ENCODE measurements at regions of chr14 and their contacts with region 1.

Region 1: DNA sequence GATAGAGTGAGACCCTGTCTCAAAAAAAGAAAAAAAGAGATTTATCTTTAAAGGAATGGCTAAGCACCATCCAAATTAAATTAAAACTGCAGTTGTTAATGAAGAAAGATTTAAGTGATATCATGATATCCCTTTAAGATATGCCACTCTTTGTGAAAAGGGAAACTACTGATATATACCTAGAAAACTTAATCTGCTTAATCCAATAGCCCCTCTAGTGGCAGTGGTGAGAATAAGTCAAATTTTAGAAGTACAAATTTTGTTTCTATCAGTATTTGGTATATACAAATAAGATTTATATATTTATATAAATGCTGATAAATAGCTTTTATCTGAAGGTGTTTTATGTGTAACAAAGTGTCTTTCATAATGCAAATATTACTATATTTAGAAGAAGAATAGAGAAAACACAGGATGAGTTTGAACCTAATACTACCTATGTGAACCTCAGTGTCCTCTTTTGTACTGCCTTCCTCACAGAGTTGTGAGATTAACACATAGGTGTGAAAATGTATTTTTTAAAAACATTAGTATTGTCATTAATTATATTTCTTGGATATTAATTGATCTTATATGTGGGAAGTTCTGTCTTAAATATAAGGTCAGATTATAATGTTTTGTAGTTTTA is 51.4 kb upstream of the GARIN2 start:
- DNase-seq: no peak
- H3K4me3 Mint-ChIP-seq: no peak overlapping the region
- H3K27ac Mint-ChIP-seq: no peak overlapping the region
- H3K4me1 Mint-ChIP-seq: peaks cover 15% of the 10 kb centered on the region
- H3K27me3 Mint-ChIP-seq: no peaks in the 10 kb centered on the region

Region 2: GRCh38 chr14:66495218-66496098 is 642.4 kb before region 1 on chr14:
- intact Hi-C with region 1: loop called (anchors 5 kb)
- DNase-seq: no peak
- H3K4me3 Mint-ChIP-seq: no peak overlapping the region
- H3K27ac Mint-ChIP-seq: no peak overlapping the region
- H3K4me1 Mint-ChIP-seq: peaks cover 20% of the 10 kb centered on the region
- H3K27me3 Mint-ChIP-seq: peaks cover 13% of the 10 kb centered on the region

Region 3: DNA sequence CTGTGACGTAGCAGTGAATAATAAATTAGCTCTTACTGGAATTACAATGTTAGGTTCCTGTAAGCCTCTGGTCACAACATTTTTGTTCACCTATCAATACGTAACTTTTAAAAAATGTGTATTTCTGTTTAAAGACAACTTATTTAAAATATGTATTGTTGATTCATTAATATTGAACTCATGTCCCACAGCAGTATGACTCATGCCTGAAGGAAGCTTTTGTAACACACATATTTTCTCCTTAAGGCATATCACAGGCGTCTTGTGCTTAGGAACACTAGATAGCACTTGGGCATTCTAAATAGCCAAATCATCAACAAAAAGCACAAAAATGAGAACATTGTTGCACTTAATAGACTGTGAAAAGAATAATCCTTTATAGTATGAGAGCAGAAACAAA is 537.4 kb before region 1 on chr14:
- intact Hi-C with region 1: no loop called
- DNase-seq: no peak
- H3K4me3 Mint-ChIP-seq: no peak overlapping the region
- H3K27ac Mint-ChIP-seq: no peak overlapping the region
- H3K4me1 Mint-ChIP-seq: peaks cover 6% of the 10 kb centered on the region
- H3K27me3 Mint-ChIP-seq: no peaks in the 10 kb centered on the region

Region 4: GRCh38 chr14:66752109-66752508 is 385.7 kb before region 1 on chr14:
- intact Hi-C with region 1: loop called (anchors 10 kb)
- DNase-seq: no peak
- H3K4me3 Mint-ChIP-seq: no peak overlapping the region
- H3K27ac Mint-ChIP-seq: no peak overlapping the region
- H3K4me1 Mint-ChIP-seq: peaks cover 9% of the 10 kb centered on the region
- H3K27me3 Mint-ChIP-seq: peaks cover 6% of the 10 kb centered on the region

Region 5: DNA sequence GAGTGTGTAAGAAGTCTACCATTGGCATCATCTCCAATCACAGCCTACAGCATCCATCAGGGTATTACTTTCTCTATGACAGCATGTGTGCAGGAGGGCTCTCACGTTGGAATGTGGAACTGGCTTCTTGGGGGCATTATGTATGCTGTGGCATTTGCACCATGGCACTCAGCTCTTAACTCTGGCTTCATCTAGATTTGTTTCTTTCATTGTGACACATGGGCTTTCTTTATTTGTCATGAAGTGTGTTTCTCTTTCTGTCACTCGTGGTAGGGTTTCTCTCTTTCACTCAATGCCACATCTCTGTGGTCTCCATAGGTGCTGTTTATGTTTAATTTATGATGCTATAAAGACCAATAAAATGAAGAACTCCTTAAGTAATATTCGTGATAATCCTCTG is 139.8 kb before region 1 on chr14:
- intact Hi-C with region 1: loop called (anchors 2 kb)
- DNase-seq: no peak
- H3K4me3 Mint-ChIP-seq: no peak overlapping the region
- H3K27ac Mint-ChIP-seq: no peak overlapping the region
- H3K4me1 Mint-ChIP-seq: peaks cover 10% of the 10 kb centered on the region
- H3K27me3 Mint-ChIP-seq: peaks cover 6% of the 10 kb centered on the region

Region 6: DNA sequence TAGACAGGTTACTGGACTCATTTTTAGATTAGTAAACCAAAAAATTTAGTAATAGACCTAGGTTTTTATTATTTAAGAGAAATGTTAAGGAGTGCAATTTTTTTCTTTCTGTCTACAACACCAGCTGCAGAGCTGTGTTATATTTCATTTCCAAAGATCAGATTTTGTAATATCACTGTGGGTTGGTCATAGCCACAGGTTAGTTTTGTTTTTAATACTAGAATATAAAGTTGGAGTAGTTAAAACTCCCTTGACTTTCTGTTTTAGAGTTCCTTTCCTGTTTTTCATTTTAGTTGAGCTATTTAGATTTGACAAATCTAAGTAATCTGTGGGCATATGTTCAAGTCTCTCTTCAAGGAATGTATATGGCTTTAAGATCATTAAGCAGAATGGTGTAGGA is 20.7 kb after region 1 on chr14:
- intact Hi-C with region 1: loop called (anchors 2 kb)
- DNase-seq: no peak
- H3K4me3 Mint-ChIP-seq: no peak overlapping the region
- H3K27ac Mint-ChIP-seq: no peak overlapping the region
- H3K4me1 Mint-ChIP-seq: peaks cover 18% of the 10 kb centered on the region
- H3K27me3 Mint-ChIP-seq: peaks cover 5% of the 10 kb centered on the region

Region 7: DNA sequence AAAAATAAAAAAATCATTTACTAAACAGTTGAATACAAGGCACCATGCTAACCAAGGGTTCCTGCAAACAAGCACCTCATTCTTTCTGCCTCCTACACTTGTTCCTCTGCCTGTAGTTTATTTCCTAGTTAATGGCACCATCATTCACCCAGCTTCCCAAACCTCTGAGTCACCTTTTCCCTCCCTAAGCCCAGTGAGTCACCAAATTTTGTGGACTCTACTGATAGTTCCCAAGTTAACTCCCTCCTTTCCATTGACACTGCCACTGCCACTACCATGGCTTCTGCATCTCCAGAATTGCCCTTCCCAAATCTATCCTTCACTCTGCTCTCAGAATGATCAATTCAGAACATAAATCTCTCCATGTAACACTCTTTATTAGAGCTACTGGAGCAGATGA is 49.4 kb after region 1 on chr14:
- intact Hi-C with region 1: loop called (anchors 1 kb)
- DNase-seq: no peak
- H3K4me3 Mint-ChIP-seq: no peak overlapping the region
- H3K27ac Mint-ChIP-seq: no peak overlapping the region
- H3K4me1 Mint-ChIP-seq: peaks cover 30% of the 10 kb centered on the region
- H3K27me3 Mint-ChIP-seq: no peaks in the 10 kb centered on the region

Measured in activated T-helper 2 cell treated with anti-CD3 and anti-CD28 coated beads, Interferon-gamma antibody, Interleukin-2, Interleukin-4, amounts not matched to agents 10 μg/mL and 5 μg/mL and 100 μg/mL, durations not matched to agents 14 hours and 24 hours and 36 hours (primary cell).